Activated CD4-positive, alpha-beta T cell treated with anti-CD3 and anti-CD28 coated beads for 36 hours (primary cell): ENCODE measurements at regions of chr5 and their contacts with region 1.

Region 1: GRCh38 chr5:160467555-160468362 is 46.1 kb downstream of the PTTG1 start:
- DNase-seq: peak; percentile 89
- ATAC-seq: peak; percentile 85
- H3K4me3 Mint-ChIP-seq: peak overlapping the region; percentile 88
- H3K27ac Mint-ChIP-seq: peak overlapping the region; percentile 99
- H3K4me1 Mint-ChIP-seq: peaks cover 76% of the 10 kb centered on the region
- H3K27me3 Mint-ChIP-seq: no peaks in the 10 kb centered on the region

Region 2: DNA sequence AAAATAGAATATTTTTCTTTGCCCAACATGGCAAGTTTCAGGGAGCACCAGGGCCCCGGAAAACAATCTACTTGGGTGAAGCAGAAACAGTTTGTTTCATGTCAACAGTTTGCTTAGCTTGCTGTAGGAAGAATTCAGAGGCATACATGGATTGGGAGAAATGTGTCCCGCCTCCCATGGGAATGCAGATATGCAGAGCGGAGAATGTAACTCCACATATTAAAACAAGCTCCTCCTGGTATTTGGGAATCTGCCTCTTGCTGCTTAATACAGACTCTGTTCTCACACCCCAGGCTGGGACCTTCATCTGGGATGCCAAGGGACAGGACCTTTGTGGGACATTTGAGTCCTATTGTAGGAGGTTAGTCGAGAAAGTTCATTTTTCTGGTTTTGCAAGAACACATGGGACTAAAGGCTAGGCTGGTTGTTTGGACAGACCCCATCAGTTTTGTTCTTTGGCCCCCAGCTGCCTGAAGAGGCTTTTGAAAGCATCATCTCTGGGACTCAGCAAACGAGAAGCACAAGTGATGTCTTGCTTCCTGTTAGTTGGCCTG is 771.9 kb before region 1 on chr5:
- CTCF ChIA-PET with region 1: no interaction called
- POLR2A ChIA-PET with region 1: no interaction called
- intact Hi-C with region 1: no loop called
- DNase-seq: no peak
- ATAC-seq: no peak
- H3K4me3 Mint-ChIP-seq: no peak overlapping the region
- H3K27ac Mint-ChIP-seq: no peak overlapping the region
- H3K4me1 Mint-ChIP-seq: no peaks in the 10 kb centered on the region
- H3K27me3 Mint-ChIP-seq: peaks cover 8% of the 10 kb centered on the region

Region 3: GRCh38 chr5:160105686-160106360 is 361.9 kb before region 1 on chr5:
- CTCF ChIA-PET with region 1: no interaction called
- POLR2A ChIA-PET with region 1: interaction called, 10 read pairs
- intact Hi-C with region 1: no loop called
- DNase-seq: no peak
- ATAC-seq: no peak
- H3K4me3 Mint-ChIP-seq: no peak overlapping the region
- H3K27ac Mint-ChIP-seq: no peak overlapping the region
- H3K4me1 Mint-ChIP-seq: peaks cover 13% of the 10 kb centered on the region
- H3K27me3 Mint-ChIP-seq: no peaks in the 10 kb centered on the region

Region 4: GRCh38 chr5:160199410-160199911 is 268.3 kb before region 1 on chr5:
- CTCF ChIA-PET with region 1: no interaction called
- POLR2A ChIA-PET with region 1: no interaction called
- intact Hi-C with region 1: no loop called
- DNase-seq: peak; percentile 88
- ATAC-seq: peak; percentile 99
- H3K4me3 Mint-ChIP-seq: peak overlapping the region; percentile 57
- H3K27ac Mint-ChIP-seq: no peak overlapping the region
- H3K4me1 Mint-ChIP-seq: peaks cover 9% of the 10 kb centered on the region
- H3K27me3 Mint-ChIP-seq: peaks cover 8% of the 10 kb centered on the region

Region 5: GRCh38 chr5:160479926-160480325 is 12.2 kb after region 1 on chr5:
- CTCF ChIA-PET with region 1: interaction called, 3 read pairs
- POLR2A ChIA-PET with region 1: interaction called, 10 read pairs
- intact Hi-C with region 1: loop called in 1 of 2 experiments (anchors 1 kb)
- DNase-seq: no peak
- ATAC-seq: peak; percentile 80
- H3K4me3 Mint-ChIP-seq: no peak overlapping the region
- H3K27ac Mint-ChIP-seq: peak overlapping the region; percentile 61
- H3K4me1 Mint-ChIP-seq: peaks cover 54% of the 10 kb centered on the region
- H3K27me3 Mint-ChIP-seq: no peaks in the 10 kb centered on the region

Region 6: GRCh38 chr5:160493806-160494338 is 26.1 kb after region 1 on chr5:
- CTCF ChIA-PET with region 1: interaction called, 3 read pairs
- POLR2A ChIA-PET with region 1: no interaction called
- intact Hi-C with region 1: loop called in 1 of 2 experiments (anchors 1 kb)
- DNase-seq: no peak
- ATAC-seq: peak; percentile 57
- H3K4me3 Mint-ChIP-seq: no peak overlapping the region
- H3K27ac Mint-ChIP-seq: no peak overlapping the region
- H3K4me1 Mint-ChIP-seq: peaks cover 31% of the 10 kb centered on the region
- H3K27me3 Mint-ChIP-seq: no peaks in the 10 kb centered on the region